ENCODE measurements at regions of chr1 and their contacts with region 1.

Region 1: DNA sequence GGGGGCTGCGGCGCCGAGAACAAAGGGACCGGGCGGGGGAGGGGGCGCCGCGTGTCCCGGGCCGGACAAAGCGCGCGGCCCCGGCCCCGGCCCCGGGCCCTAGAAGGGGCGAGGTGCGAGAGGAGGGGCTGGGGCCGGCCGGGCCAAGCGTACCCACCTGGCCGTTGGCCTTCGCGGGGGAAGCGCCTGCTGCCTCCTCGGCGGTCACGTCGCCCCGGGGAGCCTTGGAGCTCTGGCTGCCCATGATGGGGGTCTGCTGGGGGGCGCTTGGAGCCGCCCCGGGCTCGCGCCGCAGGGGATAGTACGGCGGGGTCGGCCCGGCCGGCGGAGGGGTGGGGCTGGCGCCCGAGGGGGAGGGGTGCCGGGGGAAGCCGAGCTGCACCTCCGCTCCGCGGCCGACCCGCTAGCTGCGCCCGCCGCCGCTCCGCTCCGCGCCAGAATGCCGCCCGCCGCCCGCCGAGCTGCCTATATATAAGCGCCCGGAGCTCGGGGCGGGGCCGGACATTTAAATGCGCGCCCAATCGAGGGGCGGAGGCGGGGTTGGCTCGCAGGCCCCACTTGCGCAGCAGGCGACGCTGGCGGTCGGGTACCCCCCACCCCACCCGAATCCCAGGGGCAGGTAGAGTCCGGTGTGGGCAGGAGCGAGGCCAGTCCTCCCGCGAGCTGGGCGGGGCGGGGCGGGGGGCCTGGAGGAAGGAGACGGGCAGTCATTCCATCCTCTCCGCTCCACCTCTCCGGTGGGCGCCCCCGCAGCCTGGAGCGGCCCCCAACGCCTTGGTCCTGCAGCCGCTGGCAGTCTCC is at the start of gene MARCKSL1:
- DNase-seq: peak; percentile 80
- H3K4me3 Mint-ChIP-seq: peak within 1 kb of the TSS; percentile 88
- H3K27ac Mint-ChIP-seq: peak within 1 kb of the TSS; percentile 67
- H3K4me1 Mint-ChIP-seq: peaks cover 52% of the 10 kb centered on the region
- H3K27me3 Mint-ChIP-seq: no peaks in the 10 kb centered on the region
- total RNA-seq, gene MARCKSL1: 31.6 and 31.8 TPM in 2 replicates

Region 2: DNA sequence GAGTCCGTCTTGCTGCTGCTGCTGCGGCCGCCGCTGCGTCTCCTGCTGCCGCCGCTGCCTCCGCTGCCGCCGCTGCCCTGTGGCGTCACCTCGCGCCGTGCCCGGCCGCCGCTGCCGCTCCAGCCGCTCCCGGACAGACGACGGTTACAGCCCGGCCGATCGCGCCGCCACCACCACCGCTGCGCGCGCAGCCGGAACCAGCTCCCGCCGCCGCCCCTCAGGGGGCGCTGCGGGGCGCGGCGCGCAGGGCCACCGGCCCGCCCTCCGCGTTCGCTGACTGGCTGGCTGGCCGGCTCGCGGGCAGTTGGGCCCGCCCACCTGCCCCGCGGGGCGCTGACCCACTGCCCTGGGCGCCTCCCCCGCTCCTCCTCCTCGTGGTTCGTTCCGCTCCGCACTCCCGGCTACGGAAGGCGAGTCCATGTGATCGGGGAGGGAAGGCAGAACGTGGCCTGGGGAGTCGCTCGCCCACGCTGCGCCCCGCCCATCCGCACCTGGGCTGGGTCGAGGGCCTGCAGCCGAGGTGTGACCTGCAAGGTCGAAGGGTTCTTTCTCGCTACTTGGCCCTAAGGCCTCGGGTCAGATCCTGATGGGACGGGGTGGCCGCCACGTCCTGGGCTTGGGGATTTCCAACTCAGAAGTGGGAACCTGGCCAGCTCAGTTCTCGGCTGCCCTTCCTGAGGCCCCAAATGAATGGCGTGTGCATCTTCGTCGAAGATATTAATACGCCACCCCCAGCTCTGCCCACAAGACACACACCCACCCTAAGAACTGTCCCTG is 397.6 kb before region 1 on chr1 and contains the start of gene PTP4A2:
- intact Hi-C with region 1: loop called (anchors 10 kb)
- DNase-seq: peak; percentile 88
- H3K4me3 Mint-ChIP-seq: peak within 1 kb of the TSS; percentile 100
- H3K27ac Mint-ChIP-seq: peak within 1 kb of the TSS; percentile 99
- H3K4me1 Mint-ChIP-seq: peaks cover 63% of the 10 kb centered on the region
- H3K27me3 Mint-ChIP-seq: no peaks in the 10 kb centered on the region
- total RNA-seq, gene PTP4A2: 390 and 421 TPM in 2 replicates

Region 3: GRCh38 chr1:32321712-32322291 is 14.2 kb before region 1 on chr1:
- intact Hi-C with region 1: loop called (anchors 2 kb)
- DNase-seq: no peak
- H3K4me3 Mint-ChIP-seq: peak overlapping the region; percentile 53
- H3K27ac Mint-ChIP-seq: peak overlapping the region; percentile 83
- H3K4me1 Mint-ChIP-seq: peaks cover 49% of the 10 kb centered on the region
- H3K27me3 Mint-ChIP-seq: no peaks in the 10 kb centered on the region

Region 4: GRCh38 chr1:32351399-32352238 is 15.6 kb after region 1 on chr1:
- intact Hi-C with region 1: loop called (anchors 1 kb)
- DNase-seq: peak; percentile 89
- H3K4me3 Mint-ChIP-seq: peak overlapping the region; percentile 82
- H3K27ac Mint-ChIP-seq: peak overlapping the region; percentile 53
- H3K4me1 Mint-ChIP-seq: peaks cover 35% of the 10 kb centered on the region
- H3K27me3 Mint-ChIP-seq: peaks cover 6% of the 10 kb centered on the region

Region 5: GRCh38 chr1:32372149-32372756 is 36.3 kb after region 1 on chr1:
- intact Hi-C with region 1: loop called (anchors 1 kb)
- DNase-seq: peak; percentile 66
- H3K4me3 Mint-ChIP-seq: no peak overlapping the region
- H3K27ac Mint-ChIP-seq: no peak overlapping the region
- H3K4me1 Mint-ChIP-seq: peaks cover 21% of the 10 kb centered on the region
- H3K27me3 Mint-ChIP-seq: no peaks in the 10 kb centered on the region

Region 6: DNA sequence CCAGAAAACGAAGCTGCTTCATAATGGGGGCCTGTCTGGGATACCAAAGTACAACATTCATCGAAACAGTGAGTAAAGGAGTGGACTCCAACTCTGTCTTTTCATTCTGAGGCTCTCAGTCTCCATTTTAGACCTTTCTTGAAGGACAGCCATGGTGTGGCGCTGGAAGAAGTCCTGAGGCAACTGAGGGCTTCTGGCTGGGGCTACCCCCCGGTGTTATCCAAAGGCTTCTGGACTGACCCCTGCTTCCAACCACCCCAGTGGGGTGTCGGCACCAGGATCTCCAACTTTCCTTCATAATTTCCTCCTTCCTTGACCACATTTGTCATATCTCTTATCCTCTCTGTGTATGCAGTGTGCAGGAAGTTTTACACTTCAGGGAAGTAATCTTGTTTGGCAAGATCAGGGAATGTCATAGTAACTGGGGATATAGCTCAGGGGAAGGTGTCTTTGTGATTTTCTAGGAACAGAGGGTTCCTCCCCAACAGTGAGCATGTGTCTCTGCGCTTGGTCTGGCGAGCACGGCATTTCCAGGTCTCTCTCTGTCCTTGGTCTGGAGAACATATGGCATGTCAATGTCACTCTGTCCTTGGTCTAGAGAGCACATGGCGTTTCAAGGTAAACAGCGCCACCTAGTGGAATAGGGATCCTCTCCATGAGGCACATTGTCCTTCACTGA is 77.7 kb after region 1 on chr1:
- intact Hi-C with region 1: loop called (anchors 2 kb)
- DNase-seq: peak; percentile 62
- H3K4me3 Mint-ChIP-seq: no peak overlapping the region
- H3K27ac Mint-ChIP-seq: no peak overlapping the region
- H3K4me1 Mint-ChIP-seq: peaks cover 4% of the 10 kb centered on the region
- H3K27me3 Mint-ChIP-seq: peaks cover 18% of the 10 kb centered on the region

Measured in activated T-helper 1 cell treated with anti-CD3 and anti-CD28 coated beads, Interleukin-12 subunit alpha, Interleukin-12 subunit beta, Interleukin-2, Interleukin-4 antibody, amounts not matched to agents 30 ng/mL and 10 ng/mL and 1 ng/mL, durations not matched to agents 14 hours and 24 hours and 36 hours (primary cell).